Activated CD8-positive, alpha-beta T cell treated with anti-CD3 and anti-CD28 coated beads, Interleukin-2, amount 10 ng/mL, durations not matched to agents 7 days and 5 days (primary cell): ENCODE measurements at regions of chr1 and their contacts with region 1.

Region 1: GRCh38 chr1:40257688-40258444 is at the start of gene ZMPSTE24:
- DNase-seq: peak; percentile 98
- ATAC-seq: peak; percentile 96
- H3K4me3 Mint-ChIP-seq: peak within 1 kb of the TSS; percentile 99
- H3K27ac Mint-ChIP-seq: peak within 1 kb of the TSS; percentile 100
- H3K4me1 Mint-ChIP-seq: peaks cover 49% of the 10 kb centered on the region
- H3K27me3 Mint-ChIP-seq: no peaks in the 10 kb centered on the region
- total RNA-seq, gene ZMPSTE24: 28.9 to 29.8 TPM

Region 2: GRCh38 chr1:40210514-40211204 is 47.2 kb before region 1 on chr1:
- CTCF ChIA-PET with region 1: no interaction called
- POLR2A ChIA-PET with region 1: no interaction called
- DNase-seq: no peak
- ATAC-seq: no peak
- H3K4me3 Mint-ChIP-seq: no peak overlapping the region
- H3K27ac Mint-ChIP-seq: no peak overlapping the region
- H3K4me1 Mint-ChIP-seq: peaks cover 3% of the 10 kb centered on the region
- H3K27me3 Mint-ChIP-seq: no peaks in the 10 kb centered on the region

Region 3: GRCh38 chr1:40241362-40241761 is 16.5 kb before region 1 on chr1:
- CTCF ChIA-PET with region 1: interaction called, 6 read pairs
- POLR2A ChIA-PET with region 1: interaction called, 21 read pairs
- DNase-seq: no peak
- ATAC-seq: no peak
- H3K4me3 Mint-ChIP-seq: no peak overlapping the region
- H3K27ac Mint-ChIP-seq: peak overlapping the region; percentile 76
- H3K4me1 Mint-ChIP-seq: peaks cover 36% of the 10 kb centered on the region
- H3K27me3 Mint-ChIP-seq: no peaks in the 10 kb centered on the region